ENCODE measurements at regions of chr3 and their contacts with region 1.

Region 1: DNA sequence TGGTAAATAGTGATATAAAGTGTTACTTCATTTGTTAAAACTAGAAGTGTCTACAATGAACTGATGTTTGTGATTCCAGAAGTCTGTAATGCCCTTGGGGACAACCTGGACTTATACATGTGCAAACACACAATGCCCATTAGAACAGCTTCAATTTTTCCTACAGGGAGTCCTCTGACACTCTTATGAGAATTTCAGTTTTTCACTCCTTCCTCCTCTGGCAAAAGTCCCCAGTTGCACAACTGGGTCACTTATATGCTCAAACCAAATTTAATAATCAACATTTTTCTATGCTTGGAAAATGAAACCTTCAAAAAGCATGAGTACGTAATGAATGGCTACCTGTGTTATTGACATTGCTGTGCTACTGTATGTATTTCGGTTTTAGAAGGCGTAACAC is at the start of gene OR5H15:
- DNase-seq: no peak
- ATAC-seq: no peak
- H3K4me3 ChIP-seq: no peak within 1 kb of the TSS
- H3K4me3 Mint-ChIP-seq: no peak within 1 kb of the TSS
- H3K27ac ChIP-seq: no peak within 1 kb of the TSS
- H3K27ac Mint-ChIP-seq: no peak within 1 kb of the TSS
- H3K4me1 ChIP-seq: no peaks in the 10 kb centered on the region
- H3K4me1 Mint-ChIP-seq: no peaks in the 10 kb centered on the region
- H3K27me3 ChIP-seq: no peaks in the 10 kb centered on the region
- H3K27me3 Mint-ChIP-seq: peaks cover 9% of the 10 kb centered on the region
- CTCF ChIP-seq: no peak
- total RNA-seq, gene OR5H15: not detected

Region 2: DNA sequence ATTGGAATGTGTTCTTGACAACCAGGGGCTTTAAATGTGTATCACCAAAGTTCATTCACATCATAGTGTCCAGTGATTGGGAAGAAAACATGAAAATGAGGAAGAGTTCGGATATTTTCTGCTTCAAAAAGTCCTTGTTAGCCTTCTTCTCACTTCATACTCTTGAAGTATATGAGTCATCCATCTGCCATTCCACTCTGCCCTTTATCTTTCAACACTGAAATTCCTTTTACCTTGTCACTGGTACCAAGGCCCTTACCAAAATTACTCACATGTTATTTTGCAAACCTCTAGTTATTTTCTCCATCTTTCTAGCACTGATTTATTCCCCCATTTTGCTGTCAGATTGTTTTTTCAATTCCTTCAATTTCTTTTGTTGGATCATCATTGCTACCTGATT is 32.6 kb after region 1 on chr3:
- CTCF ChIA-PET with region 1: no interaction called
- POLR2A ChIA-PET with region 1: no interaction called
- intact Hi-C with region 1: loop called in 1 of 2 experiments (anchors 1 kb)
- DNase-seq: no peak
- ATAC-seq: no peak
- H3K4me3 ChIP-seq: no peak overlapping the region
- H3K4me3 Mint-ChIP-seq: no peak overlapping the region
- H3K27ac ChIP-seq: no peak overlapping the region
- H3K27ac Mint-ChIP-seq: no peak overlapping the region
- H3K4me1 ChIP-seq: no peaks in the 10 kb centered on the region
- H3K4me1 Mint-ChIP-seq: no peaks in the 10 kb centered on the region
- H3K27me3 ChIP-seq: no peaks in the 10 kb centered on the region
- H3K27me3 Mint-ChIP-seq: peaks cover 8% of the 10 kb centered on the region
- CTCF ChIP-seq: no peak

Measured in CD8-positive, alpha-beta T cell (primary cell).